ENCODE measurements at regions of chr11 and their contacts with region 1.

Region 1: DNA sequence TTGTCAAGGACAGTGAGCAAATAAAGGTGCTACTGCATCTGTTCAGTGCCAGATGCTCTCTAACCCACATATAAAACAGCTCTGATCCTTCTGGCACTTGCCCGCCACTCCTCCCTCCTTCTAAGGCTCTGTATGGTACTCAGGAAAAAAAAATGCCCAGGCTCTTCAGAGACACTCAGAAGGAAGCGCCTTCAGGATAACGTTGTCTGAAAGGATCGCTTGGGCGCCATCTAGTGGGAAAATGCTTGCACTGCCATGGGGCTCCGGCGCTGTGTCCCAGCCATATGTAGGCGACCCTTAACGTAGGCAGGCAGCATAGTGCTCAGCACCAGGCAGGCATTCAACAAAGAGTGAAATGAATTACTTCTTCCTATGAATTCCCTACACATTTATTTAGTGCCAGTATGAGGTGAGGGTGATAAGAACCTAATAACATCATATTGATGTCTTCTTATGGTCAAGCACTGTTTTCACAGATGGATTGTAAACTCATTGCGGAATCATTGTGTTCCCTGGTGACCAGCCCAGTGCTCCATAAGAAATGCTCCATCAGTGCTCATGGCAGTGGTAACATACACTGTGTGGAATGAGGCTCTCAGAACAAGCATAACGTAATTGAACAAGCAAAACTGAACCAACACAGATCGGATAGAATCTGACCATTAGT is 39.6 kb downstream of the PAMR1 start:
- DNase-seq: peak; percentile 73
- ATAC-seq: peak; percentile 99
- H3K4me3 ChIP-seq: no peak overlapping the region
- H3K27ac ChIP-seq: no peak overlapping the region
- H3K4me1 ChIP-seq: peaks cover 0 to 4% of the 10 kb centered on the region in 2 experiments; a peak in 1 of 4 replicates
- H3K27me3 ChIP-seq: no peaks in the 10 kb centered on the region
- CTCF ChIP-seq: peak; percentile 71 to 93 (median 92)
- POLR2A ChIP-seq: no peak
- RAD21 ChIP-seq: peak; percentile 71

Region 2: DNA sequence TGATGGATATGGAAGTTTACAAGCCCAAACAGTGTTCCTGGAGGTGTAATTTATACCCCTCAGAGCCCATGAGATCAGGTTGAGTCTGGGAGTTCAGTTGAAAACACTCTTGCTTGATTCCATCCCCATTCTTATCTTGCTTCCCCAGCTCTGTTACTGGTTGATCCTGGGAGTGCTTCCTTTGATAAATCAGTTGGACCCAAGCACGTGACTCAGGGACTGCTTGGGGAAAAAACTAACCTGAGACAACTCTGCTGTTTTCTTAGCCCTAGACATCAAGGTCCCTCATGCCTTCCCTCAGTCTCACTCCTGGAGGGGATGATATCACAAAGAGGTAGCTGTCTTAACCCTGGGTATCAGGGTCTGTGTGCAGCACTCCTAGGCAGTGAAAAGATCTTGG is 31.4 kb before region 1 on chr11:
- CTCF ChIA-PET with region 1: no interaction called
- POLR2A ChIA-PET with region 1: no interaction called
- RAD21 ChIA-PET with region 1: no interaction called
- intact Hi-C with region 1: no loop called
- DNase-seq: no peak
- ATAC-seq: no peak
- H3K4me3 ChIP-seq: no peak overlapping the region
- H3K27ac ChIP-seq: no peak overlapping the region
- H3K4me1 ChIP-seq: no peaks in the 10 kb centered on the region
- H3K27me3 ChIP-seq: peaks cover 42% of the 10 kb centered on the region
- CTCF ChIP-seq: no peak
- POLR2A ChIP-seq: no peak
- RAD21 ChIP-seq: no peak

Region 3: DNA sequence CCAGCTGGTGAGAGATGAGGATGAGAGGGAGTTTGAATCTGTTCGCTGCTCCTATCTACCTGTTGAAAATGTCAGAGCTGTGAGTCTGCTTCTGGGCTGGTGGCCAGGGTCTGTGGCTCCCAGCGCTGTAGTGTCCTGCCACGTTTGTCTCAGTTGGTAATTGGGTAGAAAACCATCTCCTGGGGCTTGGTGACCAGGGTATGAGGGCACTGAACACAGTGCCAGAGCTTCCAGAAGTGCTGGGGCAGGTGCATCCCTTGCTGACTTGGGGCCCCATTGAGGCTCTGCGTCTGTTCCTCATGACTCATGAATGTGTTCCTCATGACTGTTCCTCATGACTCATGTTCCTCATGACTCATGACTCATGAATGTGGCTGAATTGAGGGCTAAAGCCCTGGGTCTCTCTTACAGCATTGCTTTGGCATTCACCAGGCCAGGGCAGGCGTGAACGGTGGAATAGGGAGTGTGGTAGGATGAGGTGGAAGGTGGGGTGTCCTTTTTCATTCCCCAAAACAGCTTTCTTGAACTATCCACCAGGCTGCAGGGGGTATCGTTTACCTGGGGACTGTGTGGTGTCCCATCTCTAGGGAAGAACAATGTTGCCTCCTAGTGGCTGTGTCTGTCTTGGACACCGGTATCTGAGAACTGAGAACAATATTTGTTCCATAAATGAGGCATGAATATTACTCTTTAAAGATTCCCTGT is 663.9 kb after region 1 on chr11:
- CTCF ChIA-PET with region 1: no interaction called
- POLR2A ChIA-PET with region 1: no interaction called
- RAD21 ChIA-PET with region 1: no interaction called
- intact Hi-C with region 1: loop called (anchors 1 kb)
- DNase-seq: peak; percentile 99
- ATAC-seq: peak; percentile 93
- H3K4me3 ChIP-seq: peak overlapping the region in 1 of 2 experiments; percentile 33; a peak in 2 of 4 replicates
- H3K27ac ChIP-seq: peak overlapping the region; percentile 81
- H3K4me1 ChIP-seq: peaks cover 22 to 45% of the 10 kb centered on the region in 2 experiments
- H3K27me3 ChIP-seq: no peaks in the 10 kb centered on the region
- CTCF ChIP-seq: peak; percentile 73 to 83 (median 80)
- POLR2A ChIP-seq: no peak
- RAD21 ChIP-seq: peak; percentile 83

Region 4: GRCh38 chr11:36265793-36266628 is 780.2 kb after region 1 on chr11:
- CTCF ChIA-PET with region 1: interaction called, 8 read pairs
- POLR2A ChIA-PET with region 1: no interaction called
- RAD21 ChIA-PET with region 1: interaction called in 1 of 2 experiments, 3 read pairs
- intact Hi-C with region 1: loop called (anchors 1 kb)
- DNase-seq: peak; percentile 19
- ATAC-seq: peak; percentile 96
- H3K4me3 ChIP-seq: no peak overlapping the region
- H3K27ac ChIP-seq: no peak overlapping the region
- H3K4me1 ChIP-seq: no peaks in the 10 kb centered on the region
- H3K27me3 ChIP-seq: no peaks in the 10 kb centered on the region
- CTCF ChIP-seq: peak; percentile 79 to 94 (median 82)
- POLR2A ChIP-seq: no peak
- RAD21 ChIP-seq: peak; percentile 94